ENCODE measurements at regions of chr18 and their contacts with region 1.

Region 1: DNA sequence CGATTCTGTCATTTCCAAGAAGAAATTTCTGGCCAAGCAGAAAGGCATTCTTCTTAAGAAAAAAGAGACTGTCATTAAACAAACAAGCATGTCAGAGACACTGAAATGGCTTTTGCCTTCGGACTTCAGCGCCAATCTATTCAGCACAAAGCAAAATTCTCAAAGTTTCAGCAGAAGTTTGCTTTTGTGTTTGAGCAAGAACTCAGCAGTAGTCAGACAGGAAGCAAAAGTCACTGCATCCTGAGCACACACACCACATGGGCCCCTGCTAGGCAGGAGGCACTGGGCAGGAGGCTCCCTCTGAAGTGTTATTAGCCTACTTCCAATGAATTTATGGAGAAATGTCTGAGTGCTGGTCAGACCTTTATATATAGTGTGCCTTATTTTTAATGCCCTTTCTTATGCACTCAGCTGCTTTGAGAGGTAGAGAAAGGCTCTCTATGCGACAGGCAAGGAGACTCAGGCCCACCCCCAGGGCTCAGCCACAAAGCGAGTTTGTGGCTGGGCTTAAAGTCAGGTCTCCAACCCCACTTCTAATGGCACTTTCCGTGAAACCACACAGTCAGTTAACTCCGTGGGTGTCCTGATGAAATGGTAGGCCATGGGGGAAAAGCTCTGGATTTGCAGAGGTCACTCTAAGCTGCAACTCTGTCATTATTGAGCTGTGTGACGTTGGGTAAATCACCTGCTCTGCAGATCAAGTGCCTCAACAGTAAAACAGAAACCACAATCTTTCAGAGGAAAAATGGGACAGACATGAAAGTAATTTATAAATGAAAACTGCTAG is 161.0 kb upstream of the TMEM200C start:
- DNase-seq: no peak
- ATAC-seq: no peak

Region 2: GRCh38 chr18:5890331-5891183 is 165.8 kb before region 1 on chr18:
- intact Hi-C with region 1: loop called in 1 of 2 experiments (anchors 5 kb)
- DNase-seq: peak; percentile 47
- ATAC-seq: peak; percentile 92 to 93

Region 3: DNA sequence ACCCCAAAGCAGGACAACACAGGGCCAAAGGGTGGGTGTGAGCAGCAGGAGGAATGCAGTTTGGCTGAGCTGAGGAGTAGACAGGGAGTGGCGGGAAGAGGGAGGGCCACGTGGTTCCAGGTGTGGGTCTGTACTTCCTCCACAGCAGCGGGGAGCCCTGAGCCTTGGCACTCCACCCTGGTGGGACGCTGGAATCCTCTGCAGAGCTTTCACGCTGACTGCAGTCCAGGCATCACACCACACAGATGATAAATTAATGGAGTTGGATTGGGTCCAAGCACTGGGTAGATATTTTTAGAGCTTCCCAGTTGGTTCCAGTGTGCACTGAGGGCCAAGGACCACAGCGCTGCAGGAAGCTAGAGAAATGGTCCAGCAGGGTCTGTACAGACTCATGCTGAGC is 94.0 kb before region 1 on chr18:
- intact Hi-C with region 1: loop called in 1 of 2 experiments (anchors 5 kb)
- DNase-seq: no peak
- ATAC-seq: peak; percentile 39 to 57

Region 4: GRCh38 chr18:6022089-6022444 is 34.3 kb before region 1 on chr18:
- intact Hi-C with region 1: no loop called
- DNase-seq: no peak
- ATAC-seq: no peak

Region 5: DNA sequence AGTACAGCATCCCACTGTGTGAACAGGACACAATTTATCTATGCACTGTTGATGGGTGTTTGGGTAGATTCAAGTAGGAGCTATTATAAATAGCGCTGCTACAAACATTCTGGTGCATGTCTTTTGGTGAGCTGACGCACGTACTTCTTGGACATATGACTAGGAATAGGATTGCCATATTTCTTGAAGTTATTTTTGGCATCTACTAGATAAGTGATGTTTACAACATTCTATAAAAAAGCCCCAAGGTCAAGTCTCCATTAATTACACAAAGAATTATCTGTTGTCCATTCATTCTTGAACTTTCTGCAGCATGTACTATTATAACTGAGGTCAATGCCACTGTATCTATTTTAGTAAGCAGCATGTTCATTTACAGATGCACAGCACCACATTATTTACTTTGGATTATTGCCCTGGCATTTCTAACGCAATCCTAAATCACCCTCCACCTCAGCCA is 64.5 kb after region 1 on chr18:
- intact Hi-C with region 1: loop called in 1 of 2 experiments (anchors 5 kb)
- DNase-seq: no peak
- ATAC-seq: peak; percentile 76 to 87

Region 6: DNA sequence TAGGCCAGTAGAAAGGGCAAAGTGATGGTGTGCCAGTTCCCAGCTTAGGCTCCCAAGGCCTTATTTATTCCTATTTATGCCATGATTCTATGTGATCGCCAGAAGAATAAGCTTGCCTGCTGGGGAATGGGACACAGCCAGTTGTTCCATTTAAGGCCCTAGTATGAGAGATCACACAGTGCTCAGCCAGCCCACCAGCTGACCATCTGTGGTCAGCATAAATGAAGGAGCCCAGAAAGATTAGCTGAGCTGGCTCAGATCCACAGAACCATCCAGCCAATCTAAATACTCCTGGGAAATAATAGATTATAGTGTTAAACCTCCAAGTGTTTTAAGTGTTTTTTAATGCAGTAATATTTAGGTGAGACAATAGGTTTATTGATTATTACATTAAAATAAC is 370.9 kb after region 1 on chr18:
- intact Hi-C with region 1: loop called in 1 of 2 experiments (anchors 10 kb)
- DNase-seq: no peak
- ATAC-seq: no peak

Measured in left cardiac atrium (tissue), 4 donors.